ENCODE measurements at regions of chr12 and their contacts with region 1.

Region 1: DNA sequence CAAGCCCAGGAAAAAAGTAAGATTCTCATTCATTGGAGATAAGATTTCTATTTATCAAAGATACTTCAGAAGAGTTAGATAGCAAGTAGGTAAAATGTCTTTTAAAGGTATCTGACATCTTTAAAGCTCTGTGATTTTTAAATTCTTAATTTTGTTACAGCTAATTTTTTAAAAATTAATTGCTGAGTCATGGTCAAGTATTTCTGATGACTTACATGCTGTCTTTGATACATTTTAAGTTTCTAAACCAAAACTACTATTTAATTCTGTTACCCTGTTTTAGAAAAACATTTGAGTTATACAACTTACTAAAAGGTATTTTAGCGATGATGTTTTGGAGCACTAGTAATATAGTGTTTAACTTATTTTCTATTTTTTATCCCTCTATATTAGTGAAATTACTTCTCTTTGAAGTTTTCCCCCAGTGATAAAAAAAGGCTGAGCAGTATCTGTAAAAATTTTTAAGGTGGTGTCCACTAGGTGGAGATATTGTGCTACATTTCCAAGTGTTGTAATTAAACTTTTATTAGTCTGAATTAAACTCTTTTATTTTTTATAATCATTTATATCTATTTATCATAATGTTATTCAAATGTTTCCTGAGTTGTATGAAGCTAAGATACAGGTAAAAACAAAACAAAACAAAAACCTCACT is 11.5 kb downstream of the ALG10 start:
- DNase-seq: peak in 1 of 2 experiments; percentile 10
- H3K4me3 ChIP-seq: no peak overlapping the region
- H3K4me1 ChIP-seq: no peaks in the 10 kb centered on the region
- H3K27me3 ChIP-seq: no peaks in the 10 kb centered on the region

Region 2: DNA sequence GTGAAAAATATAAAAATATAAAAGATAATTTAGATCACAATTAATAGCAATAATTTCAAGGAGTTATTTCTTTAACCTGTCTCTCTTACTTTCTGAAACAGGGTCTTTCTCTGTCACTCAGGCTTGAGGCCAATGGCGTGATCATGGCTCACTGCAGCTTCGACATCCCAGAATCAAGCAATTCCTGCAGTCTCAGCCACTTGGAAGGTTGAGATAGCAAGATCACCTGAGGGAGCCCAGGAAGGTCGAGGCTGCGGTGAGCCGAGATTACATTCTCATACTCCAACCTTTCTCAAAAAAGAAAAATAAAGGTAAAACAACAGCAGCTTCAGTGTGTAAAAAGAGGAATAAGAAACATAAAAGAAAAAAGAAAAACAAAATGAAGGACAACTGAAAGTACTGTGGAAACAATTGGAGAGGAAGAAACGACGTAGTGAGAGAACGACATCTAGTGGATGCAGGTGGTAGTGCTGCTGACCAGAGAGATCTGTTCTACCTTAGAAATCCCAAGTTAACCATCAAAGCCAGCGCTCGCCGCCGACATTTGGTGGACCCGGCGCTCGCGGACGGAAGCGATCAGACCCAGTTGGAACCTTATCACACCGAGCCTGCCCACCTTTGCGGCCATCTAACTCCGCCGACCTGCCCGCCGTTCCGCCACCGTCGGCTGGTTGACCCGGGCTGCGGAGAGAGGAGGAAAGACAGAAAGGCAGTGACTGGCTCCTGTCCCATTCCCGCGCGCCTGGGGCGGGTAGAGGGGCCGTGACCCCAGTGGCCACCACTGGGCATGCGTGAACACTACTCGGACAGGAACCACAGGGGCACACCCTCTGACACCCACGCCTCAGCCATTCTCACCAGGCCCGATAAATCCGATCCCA is 184.7 kb after region 1 on chr12:
- in situ Hi-C with region 1: loop called (anchors 10 kb)
- DNase-seq: peak; percentile 46 to 79
- H3K4me3 ChIP-seq: no peak overlapping the region
- H3K4me1 ChIP-seq: no peaks in the 10 kb centered on the region
- H3K27me3 ChIP-seq: no peaks in the 10 kb centered on the region

Measured in HAP-1 (cell line).